Panc1 (cell line): ENCODE measurements at regions of chr5 and their contacts with region 1.

Region 1: DNA sequence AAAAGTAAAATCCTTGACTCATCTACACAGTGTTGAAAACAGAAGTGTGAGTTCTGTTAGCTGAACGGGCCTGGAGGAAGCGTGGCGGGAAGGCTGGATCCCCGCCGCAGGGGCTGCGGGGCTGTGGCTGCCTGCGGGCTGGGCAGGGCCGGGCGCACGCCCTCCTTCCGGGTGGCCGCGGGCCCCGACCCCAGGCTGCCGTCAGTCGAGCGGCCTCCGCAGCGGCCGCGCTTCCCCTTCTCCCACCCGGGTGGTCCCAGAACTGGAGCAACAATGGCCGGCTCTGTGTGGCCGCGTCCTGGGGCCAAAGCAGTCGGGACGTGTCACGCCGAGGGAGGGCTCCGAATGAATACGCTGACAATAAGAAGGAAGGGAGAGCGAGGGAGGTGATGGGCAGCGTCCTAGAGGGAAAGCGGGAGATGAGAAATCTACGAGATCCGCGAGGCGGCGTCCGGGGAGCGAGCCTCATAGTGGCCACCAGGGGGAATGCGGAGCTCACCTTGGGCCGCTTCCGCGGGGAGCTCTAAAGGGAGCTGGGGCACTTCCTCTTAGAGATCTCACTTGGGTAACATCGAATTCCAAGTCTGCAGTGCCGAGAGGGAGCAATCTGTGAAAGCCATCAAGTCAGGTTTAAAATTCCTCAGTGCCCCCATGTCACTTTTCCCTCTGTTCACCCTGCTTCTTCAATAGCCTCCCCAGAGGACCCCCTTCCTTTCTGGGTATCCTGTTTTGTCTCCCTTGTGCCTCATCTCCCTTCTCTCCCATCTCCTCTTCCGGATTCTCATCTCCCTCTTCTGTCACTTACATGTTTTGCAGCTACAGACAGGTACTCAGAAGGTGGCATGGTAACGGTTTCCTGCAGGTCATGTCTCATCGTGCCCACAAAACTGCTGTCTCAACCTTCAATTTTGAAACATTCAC is 83.9 kb downstream of the SLC1A3 start:
- DNase-seq: peak; percentile 52
- ATAC-seq: peak; percentile 96
- H3K4me3 ChIP-seq: peak overlapping the region; percentile 41 to 59
- H3K27ac ChIP-seq: no peak overlapping the region
- H3K4me1 ChIP-seq: peaks cover 4% of the 10 kb centered on the region; the same call in 1 of the 2 replicates
- H3K27me3 ChIP-seq: no peaks in the 10 kb centered on the region; the same call in 1 of the 2 replicates
- CTCF ChIP-seq: peak; percentile 93

Region 2: GRCh38 chr5:36710030-36710429 is 19.7 kb after region 1 on chr5:
- CTCF ChIA-PET with region 1: interaction called, 16 read pairs
- POLR2A ChIA-PET with region 1: no interaction called
- in situ Hi-C with region 1: no loop called
- intact Hi-C with region 1: no loop called
- DNase-seq: no peak
- ATAC-seq: no peak
- H3K4me3 ChIP-seq: no peak overlapping the region
- H3K27ac ChIP-seq: no peak overlapping the region
- H3K4me1 ChIP-seq: no peaks in the 10 kb centered on the region
- H3K27me3 ChIP-seq: no peaks in the 10 kb centered on the region
- CTCF ChIP-seq: no peak

Region 3: DNA sequence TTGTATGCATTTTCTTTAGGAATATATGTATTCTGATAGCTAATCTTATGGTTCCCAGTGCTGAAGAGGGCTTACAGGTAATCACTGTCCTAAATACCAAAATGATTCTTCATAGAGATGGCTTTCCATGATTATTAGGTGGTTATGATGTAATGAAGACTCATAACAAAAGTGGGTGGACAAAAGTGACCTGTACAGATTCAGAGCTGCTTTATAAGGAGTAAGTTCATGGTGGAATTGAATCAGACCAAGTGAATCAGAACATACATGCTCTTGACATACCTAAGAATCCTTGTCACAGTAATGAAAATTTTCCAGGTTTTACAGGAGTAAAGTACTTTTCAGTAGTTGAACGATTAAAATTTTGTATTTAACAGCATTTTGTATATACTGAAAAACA is 291.8 kb after region 1 on chr5:
- CTCF ChIA-PET with region 1: no interaction called
- POLR2A ChIA-PET with region 1: no interaction called
- in situ Hi-C with region 1: no loop called
- intact Hi-C with region 1: no loop called
- DNase-seq: no peak
- ATAC-seq: no peak
- H3K4me3 ChIP-seq: no peak overlapping the region
- H3K27ac ChIP-seq: no peak overlapping the region
- H3K4me1 ChIP-seq: no peaks in the 10 kb centered on the region; the same call in 1 of the 2 replicates
- H3K27me3 ChIP-seq: no peaks in the 10 kb centered on the region
- CTCF ChIP-seq: no peak

Region 4: GRCh38 chr5:37208883-37209797 is 518.8 kb after region 1 on chr5:
- CTCF ChIA-PET with region 1: no interaction called
- POLR2A ChIA-PET with region 1: no interaction called
- in situ Hi-C with region 1: no loop called
- intact Hi-C with region 1: no loop called
- DNase-seq: no peak
- ATAC-seq: no peak
- H3K4me3 ChIP-seq: no peak overlapping the region
- H3K27ac ChIP-seq: no peak overlapping the region
- H3K4me1 ChIP-seq: no peaks in the 10 kb centered on the region
- H3K27me3 ChIP-seq: no peaks in the 10 kb centered on the region
- CTCF ChIP-seq: no peak